ENCODE measurements at regions of chr13 and their contacts with region 1.

Region 1: DNA sequence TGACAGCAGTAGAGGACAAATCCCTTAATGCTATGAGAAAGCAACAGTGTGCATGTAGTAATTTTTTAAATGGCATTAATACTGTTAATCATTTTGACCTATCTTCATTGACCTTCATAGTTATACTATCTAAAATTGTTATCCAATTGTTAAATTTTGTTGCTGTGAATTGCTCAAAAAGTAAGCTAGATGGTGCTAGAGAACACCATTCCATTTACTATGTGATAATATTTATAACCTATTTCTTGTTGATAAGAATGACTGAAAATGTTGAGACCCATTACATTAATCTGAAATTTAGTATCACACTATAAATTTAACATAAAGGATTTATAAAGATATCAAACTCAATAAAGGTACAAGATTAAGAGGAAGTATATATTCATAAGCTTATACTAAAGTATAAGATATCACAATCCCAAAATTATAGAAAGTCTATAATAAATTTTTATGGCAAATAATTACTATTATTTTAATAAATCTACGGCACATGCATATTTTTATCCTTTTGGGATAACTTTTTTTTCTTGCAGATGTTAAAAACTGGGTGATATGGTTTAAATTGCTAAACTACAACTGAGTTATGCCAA is 1573.3 kb downstream of the PCDH9 start:
- DNase-seq: no peak
- ATAC-seq: no peak
- H3K4me3 ChIP-seq: no peak overlapping the region
- H3K27ac ChIP-seq: no peak overlapping the region
- H3K4me1 ChIP-seq: no peaks in the 10 kb centered on the region
- H3K27me3 ChIP-seq: no peaks in the 10 kb centered on the region
- CTCF ChIP-seq: peak; percentile 4 to 66 (median 43)

Region 2: GRCh38 chr13:65368832-65369231 is 288.0 kb before region 1 on chr13:
- intact Hi-C with region 1: no loop called
- DNase-seq: no peak
- ATAC-seq: no peak
- H3K4me3 ChIP-seq: no peak overlapping the region
- H3K27ac ChIP-seq: no peak overlapping the region
- H3K4me1 ChIP-seq: no peaks in the 10 kb centered on the region
- H3K27me3 ChIP-seq: no peaks in the 10 kb centered on the region
- CTCF ChIP-seq: no peak

Region 3: GRCh38 chr13:65670014-65670625 is 13.3 kb after region 1 on chr13:
- intact Hi-C with region 1: loop called in 1 of 10 experiments (anchors 1 kb)
- DNase-seq: no peak
- ATAC-seq: no peak
- H3K4me3 ChIP-seq: no peak overlapping the region
- H3K27ac ChIP-seq: no peak overlapping the region
- H3K4me1 ChIP-seq: no peaks in the 10 kb centered on the region
- H3K27me3 ChIP-seq: no peaks in the 10 kb centered on the region
- CTCF ChIP-seq: no peak

Region 4: DNA sequence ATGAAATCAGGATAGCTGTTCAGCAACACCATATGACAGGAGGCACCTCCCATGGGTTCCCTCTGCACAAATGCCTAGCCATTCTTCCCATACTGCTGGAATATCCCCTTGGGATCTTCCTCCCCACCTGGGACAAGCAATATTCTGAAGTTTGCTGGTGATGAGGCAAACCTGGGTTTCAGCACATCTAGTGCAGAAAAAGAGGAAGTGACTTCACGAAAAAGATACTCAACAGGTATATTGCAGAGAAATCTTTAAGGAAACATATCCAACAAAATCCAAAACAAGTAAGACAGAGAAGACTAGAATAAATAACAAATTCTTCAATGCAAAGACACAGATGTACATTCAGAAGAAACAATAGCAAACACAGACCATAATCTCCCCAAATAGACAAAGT is 76.3 kb after region 1 on chr13:
- intact Hi-C with region 1: no loop called
- DNase-seq: no peak
- ATAC-seq: no peak
- H3K4me3 ChIP-seq: no peak overlapping the region
- H3K27ac ChIP-seq: no peak overlapping the region
- H3K4me1 ChIP-seq: no peaks in the 10 kb centered on the region
- H3K27me3 ChIP-seq: no peaks in the 10 kb centered on the region
- CTCF ChIP-seq: no peak

Region 5: GRCh38 chr13:67238277-67238859 is 1581.5 kb after region 1 on chr13:
- intact Hi-C with region 1: loop called in 1 of 10 experiments (anchors 5 kb)
- DNase-seq: no peak
- ATAC-seq: no peak
- H3K4me3 ChIP-seq: no peak overlapping the region
- H3K27ac ChIP-seq: no peak overlapping the region
- H3K4me1 ChIP-seq: peaks cover 0 to 3% (median 0%) of the 10 kb centered on the region in 9 donors
- H3K27me3 ChIP-seq: no peaks in the 10 kb centered on the region
- CTCF ChIP-seq: peak; percentile 68 to 92 (median 85)

Measured in heart right ventricle (tissue), 16 donors.